ENCODE measurements at regions of chr5 and their contacts with region 1.

Region 1: DNA sequence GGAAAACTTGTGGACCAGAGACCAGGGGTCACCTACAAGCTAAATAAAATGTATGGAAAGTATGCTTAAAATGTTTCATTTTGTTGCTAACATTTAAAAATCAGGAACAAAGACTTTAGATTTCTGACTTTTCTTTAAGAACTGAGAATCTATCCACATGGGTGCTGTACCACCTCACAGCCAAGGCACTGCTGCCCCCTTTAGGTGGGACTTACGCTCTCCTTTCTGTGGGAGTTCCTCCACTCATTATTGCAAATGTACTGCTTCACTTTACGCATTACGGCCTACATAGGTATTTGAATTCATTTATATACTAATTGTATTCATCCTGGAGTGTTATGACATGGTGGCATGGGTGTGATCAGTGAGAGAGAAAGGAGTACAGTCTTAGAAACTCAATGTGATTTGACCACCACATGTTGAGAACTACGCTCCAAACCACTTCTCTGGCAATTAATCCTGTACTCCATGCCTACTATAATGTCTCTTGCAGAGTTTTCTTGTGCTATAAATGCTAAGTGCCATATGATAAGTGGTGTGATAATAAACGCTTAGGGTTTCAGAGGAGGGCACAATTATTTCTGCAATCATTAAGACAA is 24.7 kb upstream of the CETN3 start:
- DNase-seq: peak; percentile 25
- H3K4me3 ChIP-seq: no peak overlapping the region
- H3K27ac ChIP-seq: no peak overlapping the region
- H3K4me1 ChIP-seq: peaks cover 0 to 10% of the 10 kb centered on the region in 2 experiments; a peak in 2 of 4 replicates
- H3K27me3 ChIP-seq: no peaks in the 10 kb centered on the region
- CTCF ChIP-seq: peak; percentile 71
- EP300 ChIP-seq: no peak
- RAD21 ChIP-seq: peak; percentile 82

Region 2: GRCh38 chr5:88729084-88729828 is 1705.0 kb before region 1 on chr5:
- CTCF ChIA-PET with region 1: interaction called, 21 read pairs
- POLR2A ChIA-PET with region 1: no interaction called
- DNase-seq: peak; percentile 29
- H3K4me3 ChIP-seq: no peak overlapping the region; a peak in 1 of 4 replicates
- H3K27ac ChIP-seq: no peak overlapping the region
- H3K4me1 ChIP-seq: peaks cover 0 to 8% of the 10 kb centered on the region in 2 experiments; a peak in 2 of 4 replicates
- H3K27me3 ChIP-seq: no peaks in the 10 kb centered on the region
- CTCF ChIP-seq: peak; percentile 90
- EP300 ChIP-seq: no peak
- RAD21 ChIP-seq: peak; percentile 94

Region 3: GRCh38 chr5:90326995-90327394 is 107.2 kb before region 1 on chr5:
- CTCF ChIA-PET with region 1: no interaction called
- POLR2A ChIA-PET with region 1: no interaction called
- DNase-seq: no peak
- H3K4me3 ChIP-seq: no peak overlapping the region
- H3K27ac ChIP-seq: no peak overlapping the region
- H3K4me1 ChIP-seq: no peaks in the 10 kb centered on the region
- H3K27me3 ChIP-seq: no peaks in the 10 kb centered on the region
- CTCF ChIP-seq: no peak
- EP300 ChIP-seq: no peak
- RAD21 ChIP-seq: no peak

Region 4: GRCh38 chr5:90446961-90447360 is 12.7 kb after region 1 on chr5:
- CTCF ChIA-PET with region 1: interaction called, 14 read pairs
- POLR2A ChIA-PET with region 1: no interaction called
- DNase-seq: no peak
- H3K4me3 ChIP-seq: no peak overlapping the region
- H3K27ac ChIP-seq: no peak overlapping the region
- H3K4me1 ChIP-seq: no peaks in the 10 kb centered on the region
- H3K27me3 ChIP-seq: no peaks in the 10 kb centered on the region
- CTCF ChIP-seq: no peak
- EP300 ChIP-seq: no peak
- RAD21 ChIP-seq: no peak

Region 5: GRCh38 chr5:90473481-90474234 is 39.4 kb after region 1 on chr5:
- CTCF ChIA-PET with region 1: interaction called, 12 read pairs
- POLR2A ChIA-PET with region 1: no interaction called
- DNase-seq: peak; percentile 57
- H3K4me3 ChIP-seq: peak overlapping the region; percentile 89 to 93
- H3K27ac ChIP-seq: peak overlapping the region; percentile 73 to 94; a peak in 3 of 4 replicates
- H3K4me1 ChIP-seq: peaks cover 10 to 16% of the 10 kb centered on the region in 2 experiments; a peak in 3 of 4 replicates
- H3K27me3 ChIP-seq: no peaks in the 10 kb centered on the region
- CTCF ChIP-seq: no peak
- EP300 ChIP-seq: no peak
- RAD21 ChIP-seq: no peak

Region 6: DNA sequence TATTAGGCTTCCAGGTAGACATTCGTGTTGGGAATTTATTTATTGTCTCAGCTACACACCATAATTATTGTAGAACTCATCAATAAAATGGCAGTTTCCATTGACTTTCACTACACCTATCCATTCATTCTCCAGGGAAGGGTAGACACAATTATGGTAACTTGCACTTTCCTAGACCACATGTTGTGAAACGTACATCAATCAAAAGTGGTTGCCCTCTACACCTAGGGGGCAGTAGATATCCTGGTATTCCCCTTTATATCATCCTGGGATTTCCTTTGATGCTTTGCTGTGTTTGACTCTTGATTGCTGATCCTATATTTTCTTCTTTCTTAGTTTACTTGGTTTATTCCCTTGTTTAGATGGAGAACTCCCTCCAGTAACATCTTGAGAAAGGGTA is 172.3 kb after region 1 on chr5:
- CTCF ChIA-PET with region 1: no interaction called
- POLR2A ChIA-PET with region 1: no interaction called
- DNase-seq: no peak
- H3K4me3 ChIP-seq: peak overlapping the region in 1 of 2 experiments; percentile 9; a peak in 1 of 4 replicates
- H3K27ac ChIP-seq: no peak overlapping the region
- H3K4me1 ChIP-seq: no peaks in the 10 kb centered on the region; a peak in 1 of 4 replicates
- H3K27me3 ChIP-seq: no peaks in the 10 kb centered on the region
- CTCF ChIP-seq: peak; percentile 45
- EP300 ChIP-seq: no peak
- RAD21 ChIP-seq: no peak

Region 7: DNA sequence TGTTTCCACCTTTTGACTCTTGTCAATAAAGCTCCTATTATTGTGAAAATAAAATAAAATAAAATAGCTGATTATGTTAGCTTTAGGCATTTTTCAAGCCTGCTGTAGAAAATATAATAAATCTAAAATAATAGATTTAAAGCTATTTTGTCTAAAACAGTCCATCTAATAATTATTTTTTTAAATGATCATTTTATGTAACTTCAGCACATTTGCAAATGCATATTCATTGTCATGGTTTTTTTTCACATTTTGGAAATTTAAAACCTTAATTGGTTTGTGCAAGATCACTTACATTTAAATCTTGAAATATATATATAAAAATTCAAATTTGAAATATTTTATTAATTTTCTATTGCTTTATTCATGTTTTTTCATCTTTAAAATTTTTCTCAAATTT is 284.2 kb after region 1 on chr5:
- CTCF ChIA-PET with region 1: no interaction called
- POLR2A ChIA-PET with region 1: no interaction called
- DNase-seq: no peak
- H3K4me3 ChIP-seq: no peak overlapping the region
- H3K27ac ChIP-seq: no peak overlapping the region
- H3K4me1 ChIP-seq: no peaks in the 10 kb centered on the region
- H3K27me3 ChIP-seq: no peaks in the 10 kb centered on the region
- CTCF ChIP-seq: no peak
- EP300 ChIP-seq: no peak
- RAD21 ChIP-seq: no peak

Region 8: GRCh38 chr5:90783460-90784333 is 349.5 kb after region 1 on chr5:
- CTCF ChIA-PET with region 1: interaction called, 28 read pairs
- POLR2A ChIA-PET with region 1: no interaction called
- DNase-seq: peak; percentile 43
- H3K4me3 ChIP-seq: peak overlapping the region in 1 of 2 experiments; percentile 30; a peak in 1 of 4 replicates
- H3K27ac ChIP-seq: no peak overlapping the region
- H3K4me1 ChIP-seq: no peaks in the 10 kb centered on the region
- H3K27me3 ChIP-seq: no peaks in the 10 kb centered on the region
- CTCF ChIP-seq: peak; percentile 91
- EP300 ChIP-seq: no peak
- RAD21 ChIP-seq: peak; percentile 96